Psoas muscle (tissue), 8 donors: ENCODE measurements at regions of chr3 and their contacts with region 1.

Region 1: GRCh38 chr3:195106418-195106906 is 164.5 kb downstream of the XXYLT1 start:
- DNase-seq: peak; percentile 77 to 84
- ATAC-seq: peak; percentile 86 to 93 (median 89)
- H3K4me3 ChIP-seq: peak overlapping the region; percentile 50
- H3K27ac ChIP-seq: no peak overlapping the region
- H3K4me1 ChIP-seq: peaks cover 11% of the 10 kb centered on the region
- H3K27me3 ChIP-seq: no peaks in the 10 kb centered on the region
- CTCF ChIP-seq: peak; percentile 100

Region 2: DNA sequence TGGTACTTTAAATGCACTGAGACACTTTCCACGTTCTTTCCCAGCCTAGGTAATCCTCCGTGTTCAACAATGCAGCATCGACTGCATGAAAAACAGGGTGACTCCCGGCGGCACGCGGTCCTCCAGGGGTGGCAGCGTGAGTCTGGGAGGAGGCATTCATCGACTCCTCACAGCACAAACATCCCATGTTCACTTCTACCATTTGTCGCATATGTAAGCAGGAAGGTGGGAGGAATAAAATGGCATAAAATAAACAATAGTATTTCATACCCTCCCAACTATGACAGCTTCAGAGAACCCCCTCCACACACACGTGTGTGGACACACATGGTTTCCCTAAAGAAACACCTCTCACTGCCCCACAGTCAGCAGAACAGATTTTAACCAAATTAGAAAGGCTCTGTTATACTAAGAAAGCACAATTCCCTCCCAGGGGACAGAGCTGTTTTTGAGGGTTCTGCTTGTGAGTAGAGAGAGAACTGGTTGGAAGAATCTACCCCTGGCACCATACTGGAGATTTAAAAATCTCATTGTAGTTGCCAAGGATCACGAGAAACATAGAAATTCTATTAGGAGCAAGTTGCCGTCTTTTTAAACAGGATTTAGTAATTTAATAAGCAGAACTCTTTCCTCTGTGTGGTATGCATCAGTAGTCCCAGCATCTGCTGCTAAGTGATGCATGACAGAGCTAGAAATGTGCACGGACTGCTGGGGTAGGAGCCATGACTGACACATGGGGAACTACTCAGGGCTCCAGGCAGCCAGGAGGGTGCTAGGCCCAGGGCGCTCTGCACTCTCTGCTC is 414.8 kb before region 1 on chr3:
- intact Hi-C with region 1: no loop called
- DNase-seq: no peak
- ATAC-seq: no peak
- H3K4me3 ChIP-seq: no peak overlapping the region
- H3K27ac ChIP-seq: no peak overlapping the region
- H3K4me1 ChIP-seq: peaks cover 24% of the 10 kb centered on the region
- H3K27me3 ChIP-seq: no peaks in the 10 kb centered on the region
- CTCF ChIP-seq: no peak

Region 3: DNA sequence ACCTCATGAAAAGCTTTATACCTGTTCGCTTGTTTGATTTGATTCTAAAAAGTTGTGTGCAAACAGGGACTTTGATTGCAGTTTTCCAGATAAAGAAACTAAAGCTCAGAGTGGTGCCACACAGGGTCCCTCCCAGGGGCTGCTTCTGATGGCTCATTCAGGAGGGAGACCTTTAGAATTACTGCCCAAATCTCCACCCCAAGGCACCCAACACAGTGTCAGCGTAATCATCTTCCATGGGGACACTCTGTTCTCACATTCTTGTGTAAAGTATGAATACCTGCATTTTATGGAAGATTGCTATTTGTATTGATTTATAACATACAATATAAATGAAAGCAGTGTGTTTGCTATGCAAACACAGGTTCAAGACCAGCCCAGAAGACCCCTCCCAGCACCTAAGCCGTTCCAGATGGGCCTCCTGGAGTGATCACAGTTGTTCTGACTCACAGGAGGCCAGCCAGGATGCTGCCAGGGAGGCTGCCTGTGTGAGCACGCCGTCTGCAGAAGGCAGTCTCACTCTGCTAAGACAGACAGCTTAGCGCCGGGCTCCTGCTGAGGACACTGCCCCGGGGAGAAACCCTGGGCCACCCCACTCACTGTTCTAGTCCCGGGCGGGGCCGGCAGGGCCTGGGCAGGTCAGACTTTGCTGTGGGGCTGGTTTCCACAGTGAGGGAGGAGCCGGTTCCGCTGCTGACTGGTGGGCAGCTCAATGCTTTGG is 235.2 kb before region 1 on chr3:
- intact Hi-C with region 1: loop called in 1 of 2 experiments (anchors 10 kb)
- DNase-seq: peak; percentile 64 to 85
- ATAC-seq: peak; percentile 82 to 92 (median 88)
- H3K4me3 ChIP-seq: no peak overlapping the region
- H3K27ac ChIP-seq: peak overlapping the region; percentile 31
- H3K4me1 ChIP-seq: peaks cover 23% of the 10 kb centered on the region
- H3K27me3 ChIP-seq: no peaks in the 10 kb centered on the region
- CTCF ChIP-seq: no peak

Region 4: DNA sequence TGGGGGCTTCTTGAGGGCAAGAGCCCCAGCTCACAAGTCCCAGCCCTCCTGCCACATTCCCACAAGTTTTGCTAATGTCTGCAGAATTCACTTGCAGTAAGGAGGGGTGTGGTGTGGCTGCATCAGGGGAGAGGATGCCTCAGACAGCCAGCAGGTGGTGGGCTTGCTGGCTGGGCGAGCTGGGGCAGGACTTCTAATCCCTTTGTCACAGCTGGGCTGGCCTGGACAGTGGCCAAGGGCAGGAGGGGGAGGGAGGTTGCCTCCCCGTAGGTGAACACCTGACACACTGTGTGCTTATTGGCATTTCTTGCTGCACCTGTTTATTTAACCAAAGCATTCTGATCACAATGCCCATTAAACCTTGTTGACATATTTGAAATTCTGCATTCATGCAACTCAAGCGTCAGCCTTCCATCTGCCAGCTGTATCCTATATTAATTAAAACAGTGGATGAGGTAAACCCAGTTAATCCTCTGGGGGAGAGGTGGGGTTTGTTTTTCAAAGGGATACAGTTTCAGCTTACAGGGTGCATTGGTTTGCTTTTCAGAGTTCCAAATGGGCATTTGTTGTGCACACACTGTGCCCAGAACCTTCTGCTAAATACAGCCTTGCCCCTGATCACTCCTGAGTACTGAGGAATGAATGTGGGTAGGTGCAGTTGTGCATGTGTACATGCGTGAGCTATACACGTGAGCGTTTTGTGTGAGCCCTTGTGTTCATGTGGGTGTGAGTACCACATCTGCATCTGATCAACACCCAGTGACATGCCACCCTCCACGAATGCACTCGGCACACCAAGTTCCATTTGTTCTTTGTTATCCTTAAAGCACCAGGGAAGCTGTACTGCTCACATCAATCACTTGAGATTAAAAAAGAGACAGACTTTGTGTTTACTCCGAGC is 104.3 kb before region 1 on chr3:
- intact Hi-C with region 1: loop called (anchors 5 kb)
- DNase-seq: peak; percentile 55 to 77
- ATAC-seq: peak; percentile 65 to 86 (median 82)
- H3K4me3 ChIP-seq: no peak overlapping the region
- H3K27ac ChIP-seq: peak overlapping the region; percentile 53
- H3K4me1 ChIP-seq: peaks cover 13% of the 10 kb centered on the region
- H3K27me3 ChIP-seq: no peaks in the 10 kb centered on the region
- CTCF ChIP-seq: peak; percentile 55

Region 5: DNA sequence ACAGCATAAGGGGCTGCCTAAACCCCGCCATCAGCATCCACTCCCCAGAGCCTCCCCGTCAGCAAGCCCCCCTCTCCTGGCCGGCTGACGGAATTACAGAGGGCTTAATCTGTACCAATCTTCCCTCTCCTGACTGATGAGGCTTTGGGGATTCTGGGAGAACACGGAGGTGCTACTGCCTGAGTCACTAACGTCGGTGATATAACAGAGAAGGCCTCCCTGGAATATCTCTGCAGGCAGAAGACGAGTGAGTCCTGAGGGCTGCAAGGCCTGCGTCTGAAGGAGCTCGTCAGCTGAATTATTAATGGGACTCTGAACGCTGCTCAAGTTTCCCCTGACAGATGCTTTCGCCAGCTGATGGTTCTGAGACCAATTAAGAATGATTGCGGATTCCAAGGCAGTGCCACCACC is 16.8 kb after region 1 on chr3:
- intact Hi-C with region 1: no loop called
- DNase-seq: no peak
- ATAC-seq: peak in 2 of 4 donors; percentile 32 to 39
- H3K4me3 ChIP-seq: no peak overlapping the region
- H3K27ac ChIP-seq: no peak overlapping the region
- H3K4me1 ChIP-seq: no peaks in the 10 kb centered on the region
- H3K27me3 ChIP-seq: no peaks in the 10 kb centered on the region
- CTCF ChIP-seq: no peak

Region 6: GRCh38 chr3:195302431-195302830 is 196.0 kb after region 1 on chr3:
- intact Hi-C with region 1: no loop called
- DNase-seq: no peak
- ATAC-seq: no peak
- H3K4me3 ChIP-seq: no peak overlapping the region
- H3K27ac ChIP-seq: no peak overlapping the region
- H3K4me1 ChIP-seq: no peaks in the 10 kb centered on the region
- H3K27me3 ChIP-seq: no peaks in the 10 kb centered on the region
- CTCF ChIP-seq: no peak